ENCODE measurements at regions of chr1 and their contacts with region 1.

Region 1: DNA sequence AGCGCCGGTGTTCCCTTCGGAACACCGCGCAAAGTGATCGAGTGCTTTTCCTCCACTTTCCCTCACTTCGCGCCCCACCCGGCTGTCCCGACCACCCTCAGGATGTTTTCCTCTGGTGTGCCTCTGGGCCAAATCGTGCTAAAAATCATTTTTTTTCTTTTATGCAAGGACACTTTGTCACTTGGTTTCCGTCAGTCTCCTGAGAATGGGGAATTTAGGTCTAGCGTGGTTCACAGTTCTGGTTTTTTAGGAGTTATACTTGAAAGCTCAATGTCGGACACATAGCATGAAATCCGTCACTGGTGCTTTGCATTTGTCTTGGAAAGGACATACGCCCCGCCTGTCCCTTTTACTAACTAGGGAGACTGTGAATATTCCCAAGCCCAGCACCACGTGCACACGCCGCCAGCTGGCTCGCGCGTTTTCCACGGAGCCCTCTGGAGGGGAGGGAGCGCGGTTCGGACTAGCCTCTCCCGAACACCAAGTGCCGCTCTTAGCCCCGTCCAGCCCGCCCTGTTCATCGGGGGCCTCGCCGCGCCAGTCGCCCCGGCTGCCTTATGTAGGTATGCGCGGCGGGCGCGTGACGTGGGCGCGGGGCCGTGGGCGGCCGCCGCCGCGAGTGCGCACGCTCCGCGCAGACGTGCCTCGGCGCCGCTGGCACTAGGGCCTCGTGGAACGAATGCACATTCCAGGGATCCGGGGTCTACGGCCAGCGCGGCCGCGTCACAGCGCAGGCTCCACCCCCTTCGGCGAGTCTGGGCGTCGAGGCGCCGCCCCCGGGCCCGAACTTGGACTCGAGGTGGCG is 572 bp upstream of the IRF2BP2 start:
- DNase-seq: peak; percentile 96
- H3K4me3 ChIP-seq: peak overlapping the region; percentile 33 to 71 (median 47)
- H3K27ac ChIP-seq: peak overlapping the region; percentile 97 to 100 (median 100)
- H3K4me1 ChIP-seq: peaks cover 29 to 40% (median 34%) of the 10 kb centered on the region in 4 donors
- H3K27me3 ChIP-seq: no peaks in the 10 kb centered on the region
- CTCF ChIP-seq: peak in 2 of 5 experiments; percentile 2 to 13
- EP300 ChIP-seq: peak; percentile 59
- POLR2A ChIP-seq: peak; percentile 89

Region 2: DNA sequence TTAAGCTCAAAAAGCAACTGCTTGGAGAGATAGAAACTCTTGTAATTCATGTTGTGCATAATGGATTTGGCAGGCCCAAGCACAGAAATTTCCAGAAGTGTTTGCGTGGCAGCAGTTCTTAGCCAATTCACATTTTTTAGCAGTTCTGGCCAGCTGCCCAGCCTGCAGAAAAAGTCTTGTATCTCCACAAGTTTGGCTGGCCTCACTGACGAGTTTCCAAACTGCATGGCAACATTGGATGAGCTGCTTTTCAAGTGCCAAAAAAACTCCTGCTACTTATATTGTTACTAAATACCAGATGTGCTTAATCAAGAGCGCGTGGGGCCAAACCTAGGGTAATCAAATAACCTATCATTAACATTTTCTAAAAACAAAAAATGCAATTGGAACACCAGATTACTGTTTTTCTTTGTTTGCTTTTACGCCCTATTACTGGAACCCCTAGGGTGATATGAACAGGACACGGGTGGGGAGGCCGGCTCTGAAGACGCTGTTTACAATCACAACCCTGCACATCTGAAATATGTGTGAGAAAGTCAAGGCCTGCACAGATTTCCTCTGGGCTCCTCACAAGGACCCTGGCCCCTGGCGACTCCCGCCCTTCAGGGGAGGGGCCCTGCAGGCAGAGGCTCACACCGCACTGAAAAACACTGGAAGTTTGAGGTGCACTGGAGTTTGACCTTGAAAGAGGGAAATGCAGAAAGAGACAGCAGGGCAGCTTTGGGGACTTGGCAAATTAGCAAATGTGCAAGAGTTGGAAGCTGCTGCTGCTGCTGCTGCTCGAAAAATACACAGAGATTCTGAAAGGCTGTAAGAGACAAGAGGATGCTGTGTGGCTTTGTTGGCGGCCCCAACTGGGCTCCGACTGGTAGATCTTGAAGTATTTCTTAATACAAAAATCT is 76.3 kb before region 1 on chr1:
- in situ Hi-C with region 1: no loop called
- intact Hi-C with region 1: loop called (anchors 5 kb)
- DNase-seq: peak; percentile 80
- H3K4me3 ChIP-seq: no peak overlapping the region
- H3K27ac ChIP-seq: peak overlapping the region; percentile 91 to 93 (median 93)
- H3K4me1 ChIP-seq: peaks cover 79 to 96% (median 82%) of the 10 kb centered on the region in 4 donors
- H3K27me3 ChIP-seq: no peaks in the 10 kb centered on the region
- CTCF ChIP-seq: no peak
- EP300 ChIP-seq: peak; percentile 39
- POLR2A ChIP-seq: no peak

Region 3: GRCh38 chr1:234579967-234580366 is 30.6 kb before region 1 on chr1:
- in situ Hi-C with region 1: no loop called
- intact Hi-C with region 1: no loop called
- DNase-seq: no peak
- H3K4me3 ChIP-seq: no peak overlapping the region
- H3K27ac ChIP-seq: no peak overlapping the region
- H3K4me1 ChIP-seq: peaks cover 0 to 16% (median 8%) of the 10 kb centered on the region in 4 donors
- H3K27me3 ChIP-seq: no peaks in the 10 kb centered on the region
- CTCF ChIP-seq: peak in 4 of 5 experiments; percentile 27 to 42 (median 38)
- EP300 ChIP-seq: no peak
- POLR2A ChIP-seq: no peak

Region 4: GRCh38 chr1:234716908-234717375 is 106.4 kb after region 1 on chr1:
- in situ Hi-C with region 1: loop called in 3 of 4 experiments (anchors 5 to 10 kb)
- intact Hi-C with region 1: no loop called
- DNase-seq: no peak
- H3K4me3 ChIP-seq: peak overlapping the region in 1 of 4 donors; percentile 6
- H3K27ac ChIP-seq: peak overlapping the region; percentile 97 to 99 (median 98)
- H3K4me1 ChIP-seq: peaks cover 56 to 82% (median 62%) of the 10 kb centered on the region in 4 donors
- H3K27me3 ChIP-seq: no peaks in the 10 kb centered on the region
- CTCF ChIP-seq: no peak
- EP300 ChIP-seq: peak; percentile 32
- POLR2A ChIP-seq: peak; percentile 8

Region 5: DNA sequence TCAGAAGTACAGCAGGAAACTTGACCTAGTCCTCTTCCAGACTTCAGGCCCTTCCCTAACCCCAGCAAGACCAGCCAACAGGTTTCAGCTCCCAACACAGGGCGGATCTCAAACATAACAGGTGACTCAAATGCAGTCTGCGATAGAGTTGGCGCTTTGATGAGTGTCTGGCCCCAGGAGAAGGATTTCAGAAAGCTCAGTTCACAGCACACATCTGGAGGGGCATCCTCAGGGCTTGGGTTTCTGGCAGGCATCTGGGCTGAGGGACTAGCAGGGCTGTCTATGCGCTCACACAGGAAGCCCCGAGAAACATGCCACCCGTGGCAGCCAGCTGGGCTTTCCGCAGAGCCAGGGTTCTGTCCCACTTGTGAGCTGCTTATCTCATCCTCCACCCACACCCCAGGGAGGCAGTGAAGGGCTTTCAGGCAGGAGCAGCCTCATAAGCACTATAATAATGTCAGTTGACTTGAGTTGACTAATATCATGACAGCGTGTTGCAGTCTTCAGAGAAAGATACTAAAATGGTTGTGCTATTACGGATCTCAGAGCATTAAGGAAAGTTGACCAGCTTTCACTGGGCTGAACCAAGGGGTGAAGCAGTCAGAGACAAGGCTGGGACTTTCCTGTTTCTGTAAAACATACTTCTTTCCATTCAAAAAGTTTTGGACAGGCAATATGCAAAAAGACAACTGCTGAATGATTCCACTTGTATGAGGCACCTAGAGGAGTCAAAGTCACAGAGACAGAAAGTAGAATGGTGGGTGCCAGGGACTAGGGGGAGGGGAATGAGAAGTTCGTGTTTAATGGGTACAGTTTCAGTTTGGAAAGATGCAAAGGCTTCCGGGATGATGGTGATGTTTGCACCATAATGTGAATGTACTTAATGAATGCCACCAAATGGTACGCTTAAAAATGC is 232.4 kb after region 1 on chr1:
- in situ Hi-C with region 1: loop called in 1 of 4 experiments (anchors 25 kb)
- intact Hi-C with region 1: no loop called
- DNase-seq: no peak
- H3K4me3 ChIP-seq: no peak overlapping the region
- H3K27ac ChIP-seq: peak overlapping the region in 3 of 4 donors; percentile 13 to 34 (median 17)
- H3K4me1 ChIP-seq: peaks cover 0 to 39% (median 10%) of the 10 kb centered on the region in 4 donors
- H3K27me3 ChIP-seq: no peaks in the 10 kb centered on the region
- CTCF ChIP-seq: no peak
- EP300 ChIP-seq: no peak
- POLR2A ChIP-seq: no peak

Region 6: GRCh38 chr1:234918181-234918841 is 307.8 kb after region 1 on chr1:
- in situ Hi-C with region 1: no loop called
- intact Hi-C with region 1: no loop called
- DNase-seq: peak; percentile 17
- H3K4me3 ChIP-seq: no peak overlapping the region
- H3K27ac ChIP-seq: peak overlapping the region; percentile 69 to 84 (median 77)
- H3K4me1 ChIP-seq: peaks cover 25 to 37% (median 32%) of the 10 kb centered on the region in 4 donors
- H3K27me3 ChIP-seq: no peaks in the 10 kb centered on the region
- CTCF ChIP-seq: no peak
- EP300 ChIP-seq: peak; percentile 63
- POLR2A ChIP-seq: no peak

Region 7: GRCh38 chr1:234970731-234971476 is 360.4 kb after region 1 on chr1:
- in situ Hi-C with region 1: loop called in 3 of 4 experiments (anchors 5 to 10 kb)
- intact Hi-C with region 1: no loop called
- DNase-seq: peak; percentile 67
- H3K4me3 ChIP-seq: no peak overlapping the region
- H3K27ac ChIP-seq: peak overlapping the region; percentile 86 to 91 (median 88)
- H3K4me1 ChIP-seq: peaks cover 41 to 72% (median 61%) of the 10 kb centered on the region in 4 donors
- H3K27me3 ChIP-seq: no peaks in the 10 kb centered on the region
- CTCF ChIP-seq: no peak
- EP300 ChIP-seq: no peak
- POLR2A ChIP-seq: peak; percentile 18

Region 8: DNA sequence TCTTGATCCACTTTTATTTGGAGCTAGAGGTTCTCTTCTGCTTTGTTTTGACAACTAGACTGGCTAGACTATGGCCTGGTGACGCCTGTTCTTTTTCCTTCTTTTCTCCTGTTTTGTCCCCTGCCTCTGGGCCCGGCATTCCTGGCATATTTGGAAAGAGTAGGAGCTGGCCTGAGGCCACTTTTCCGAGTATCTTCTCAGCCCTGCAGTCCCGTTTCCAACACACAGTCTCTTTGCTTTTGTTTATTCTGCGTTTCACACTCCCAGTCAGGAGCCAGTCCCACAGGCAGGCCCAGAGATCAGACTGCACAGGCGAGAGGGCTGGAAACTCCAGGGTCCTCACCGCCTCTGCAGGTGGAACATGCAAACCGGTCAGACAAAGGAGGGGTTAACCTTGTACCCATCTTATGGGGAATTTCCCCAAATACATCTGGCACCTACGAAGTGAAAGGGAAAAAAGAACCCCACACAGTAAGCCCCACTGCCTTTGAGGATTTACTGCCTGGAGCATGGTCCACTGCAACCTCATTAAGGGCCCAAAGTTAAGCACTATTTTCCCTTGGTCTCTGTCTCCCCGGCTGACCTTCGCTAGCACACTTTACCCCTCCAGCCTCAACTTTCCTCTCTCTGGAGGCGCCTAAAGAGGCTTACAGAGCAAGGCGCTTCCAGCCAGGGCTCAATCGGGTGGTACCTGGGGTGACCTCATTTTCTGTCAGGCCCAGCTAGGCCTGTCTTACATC is 377.0 kb after region 1 on chr1:
- in situ Hi-C with region 1: no loop called
- intact Hi-C with region 1: loop called (anchors 5 kb)
- DNase-seq: peak; percentile 68
- H3K4me3 ChIP-seq: no peak overlapping the region
- H3K27ac ChIP-seq: peak overlapping the region; percentile 84 to 91 (median 89)
- H3K4me1 ChIP-seq: peaks cover 27 to 34% (median 30%) of the 10 kb centered on the region in 4 donors
- H3K27me3 ChIP-seq: no peaks in the 10 kb centered on the region
- CTCF ChIP-seq: no peak
- EP300 ChIP-seq: no peak
- POLR2A ChIP-seq: no peak

Measured in transverse colon (tissue), 4 donors.